IMR-90 (cell line): ENCODE measurements at regions of chr10 and their contacts with region 1.

Region 1: GRCh38 chr10:35726846-35727245 is 84.8 kb upstream of the FZD8 start:
- DNase-seq: no peak
- ATAC-seq: no peak
- H3K4me3 ChIP-seq: no peak overlapping the region
- H3K27ac ChIP-seq: no peak overlapping the region
- H3K4me1 ChIP-seq: 0 out of 2 replicates have a peak, but pooled peaks cover 3% of the 10 kb centered on the region
- H3K27me3 ChIP-seq: peaks cover 26% of the 10 kb centered on the region
- CTCF ChIP-seq: no peak
- POLR2A ChIP-seq: no peak
- RAD21 ChIP-seq: no peak

Region 2: DNA sequence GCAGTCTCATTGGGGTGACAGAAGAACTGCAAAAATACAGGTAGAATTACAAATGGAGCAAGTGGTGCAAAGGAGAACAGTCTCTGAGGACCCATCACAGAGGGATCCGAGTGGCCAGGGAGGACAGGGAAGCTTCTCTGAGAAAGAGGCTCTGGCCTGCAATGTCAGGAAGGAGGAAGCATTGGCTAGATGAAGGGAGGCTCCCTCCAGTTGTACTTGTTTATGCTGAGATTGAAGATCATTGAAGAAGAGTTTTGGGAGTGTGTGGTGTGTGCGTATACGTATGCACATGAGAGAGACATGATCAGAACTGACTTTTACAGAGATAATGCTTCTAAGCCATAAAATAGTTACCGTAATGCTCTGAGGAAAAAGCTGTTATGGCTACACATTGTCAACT is 189.9 kb after region 1 on chr10:
- CTCF ChIA-PET with region 1: no interaction called
- POLR2A ChIA-PET with region 1: no interaction called
- dilution Hi-C with region 1: no loop called
- in situ Hi-C with region 1: no loop called
- intact Hi-C with region 1: loop called (anchors 5 kb)
- DNase-seq: peak; percentile 61
- ATAC-seq: peak; percentile 38; the same call in 1 of the 2 replicates
- H3K4me3 ChIP-seq: no peak overlapping the region
- H3K27ac ChIP-seq: no peak overlapping the region
- H3K4me1 ChIP-seq: peaks cover 7% of the 10 kb centered on the region; the same call in 1 of the 2 replicates
- H3K27me3 ChIP-seq: no peaks in the 10 kb centered on the region
- CTCF ChIP-seq: peak; percentile 48
- POLR2A ChIP-seq: no peak
- RAD21 ChIP-seq: peak; percentile 66